Ovary (tissue), 10 donors: ENCODE measurements at regions of chr6 and their contacts with region 1.

Region 1: GRCh38 chr6:55088902-55089301 is 85.4 kb upstream of the HCRTR2 start:
- DNase-seq: no peak
- H3K4me3 ChIP-seq: no peak overlapping the region
- H3K27ac ChIP-seq: no peak overlapping the region
- H3K4me1 ChIP-seq: no peaks in the 10 kb centered on the region
- H3K27me3 ChIP-seq: no peaks in the 10 kb centered on the region
- CTCF ChIP-seq: no peak
- EP300 ChIP-seq: no peak
- POLR2A ChIP-seq: no peak

Region 2: GRCh38 chr6:55040102-55040848 is 48.6 kb before region 1 on chr6:
- intact Hi-C with region 1: no loop called
- DNase-seq: no peak
- H3K4me3 ChIP-seq: no peak overlapping the region
- H3K27ac ChIP-seq: no peak overlapping the region
- H3K4me1 ChIP-seq: no peaks in the 10 kb centered on the region
- H3K27me3 ChIP-seq: no peaks in the 10 kb centered on the region
- CTCF ChIP-seq: no peak
- EP300 ChIP-seq: no peak
- POLR2A ChIP-seq: no peak

Region 3: GRCh38 chr6:55100686-55101085 is 11.8 kb after region 1 on chr6:
- intact Hi-C with region 1: loop called in 1 of 4 experiments (anchors 1 kb)
- DNase-seq: no peak
- H3K4me3 ChIP-seq: no peak overlapping the region
- H3K27ac ChIP-seq: no peak overlapping the region
- H3K4me1 ChIP-seq: no peaks in the 10 kb centered on the region
- H3K27me3 ChIP-seq: no peaks in the 10 kb centered on the region
- CTCF ChIP-seq: no peak
- EP300 ChIP-seq: no peak
- POLR2A ChIP-seq: no peak